ENCODE measurements at regions of chr14 and their contacts with region 1.

Region 1: DNA sequence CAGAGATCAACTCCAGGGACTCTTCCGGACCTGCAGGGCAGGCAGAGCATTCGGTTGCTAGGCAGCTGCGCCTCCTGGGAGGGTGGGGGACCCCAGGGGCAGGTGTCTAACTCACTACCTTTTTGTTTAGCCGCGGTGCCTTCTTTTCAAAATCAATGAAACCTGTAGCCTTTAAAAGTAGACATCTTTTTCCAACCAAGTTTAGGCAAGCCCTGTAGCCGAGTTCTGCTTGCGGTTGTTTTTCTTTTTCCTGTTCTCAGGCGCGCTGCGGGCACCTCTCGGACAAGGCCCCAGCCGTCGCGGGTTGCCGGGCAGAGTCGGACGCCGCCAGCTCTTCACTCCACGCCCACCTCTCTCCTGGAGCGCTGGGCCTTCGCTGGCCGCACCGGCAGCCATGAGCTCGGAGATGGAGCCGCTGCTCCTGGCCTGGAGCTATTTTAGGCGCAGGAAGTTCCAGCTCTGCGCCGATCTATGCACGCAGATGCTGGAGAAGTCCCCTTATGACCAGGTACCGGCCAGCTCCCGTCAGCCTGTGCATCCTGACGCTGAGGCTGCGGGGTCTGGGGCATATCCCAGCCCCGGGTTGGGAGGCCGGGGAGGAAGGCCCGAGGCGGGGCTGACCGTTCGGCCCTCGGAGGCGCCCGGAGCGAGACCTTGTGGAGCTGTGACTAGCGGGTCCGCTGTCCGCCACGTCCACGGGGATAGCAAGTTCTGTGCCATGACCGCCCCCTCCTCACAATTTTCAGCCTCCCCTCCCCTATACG is at the start of gene TTC8:
- DNase-seq: peak; percentile 77
- ATAC-seq: peak; percentile 97
- H3K4me3 Mint-ChIP-seq: peak within 1 kb of the TSS; percentile 88
- H3K27ac Mint-ChIP-seq: peak within 1 kb of the TSS; percentile 100
- H3K4me1 Mint-ChIP-seq: peaks cover 14% of the 10 kb centered on the region
- H3K27me3 Mint-ChIP-seq: peaks cover 11% of the 10 kb centered on the region
- CTCF ChIP-seq: no peak
- total RNA-seq, gene TTC8: 4.8 and 6.0 TPM in 2 replicates

Region 2: DNA sequence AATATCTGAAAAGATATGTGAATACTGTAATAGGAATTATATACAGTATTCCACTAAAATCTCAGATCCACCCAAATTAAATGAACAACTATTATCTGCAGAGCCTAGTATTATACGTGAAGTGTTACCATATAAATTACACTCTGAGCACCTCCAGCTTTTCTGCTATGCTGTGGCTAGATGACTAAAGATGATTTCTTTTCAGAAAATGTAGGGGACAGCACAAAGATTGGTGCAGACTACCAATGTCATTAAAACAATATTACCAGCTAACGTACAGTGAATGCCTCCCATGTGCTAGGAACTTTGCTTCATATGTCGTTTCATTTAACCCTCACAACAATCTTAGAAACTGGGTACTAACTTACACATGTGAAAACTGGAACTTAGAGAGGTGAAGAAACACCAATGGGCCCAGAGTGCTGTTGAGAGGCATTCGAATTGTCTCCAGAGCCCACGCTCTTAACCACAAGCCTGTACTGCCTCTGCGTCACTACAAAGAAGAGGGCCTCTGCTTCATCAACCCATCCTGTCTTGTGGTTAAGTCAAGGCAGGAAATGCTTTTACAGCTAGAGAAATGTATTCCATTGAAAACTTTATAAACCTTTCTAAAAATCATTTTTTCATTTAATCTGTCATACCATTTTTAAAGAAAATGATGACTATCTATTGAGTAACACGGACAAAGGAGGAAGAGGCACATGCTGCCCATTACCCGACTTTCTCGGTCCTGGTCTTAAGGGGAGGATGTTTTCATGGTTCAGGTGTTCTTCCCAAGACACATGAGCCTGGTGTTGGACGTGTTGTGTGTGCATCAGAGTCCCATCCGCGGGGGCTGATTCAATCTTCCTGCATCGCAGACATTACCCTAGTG is 818.3 kb before region 1 on chr14:
- CTCF ChIA-PET with region 1: no interaction called
- POLR2A ChIA-PET with region 1: no interaction called
- intact Hi-C with region 1: loop called (anchors 5 kb)
- DNase-seq: no peak
- ATAC-seq: peak; percentile 79
- H3K4me3 Mint-ChIP-seq: peak overlapping the region; percentile 83
- H3K27ac Mint-ChIP-seq: peak overlapping the region; percentile 84
- H3K4me1 Mint-ChIP-seq: peaks cover 77% of the 10 kb centered on the region
- H3K27me3 Mint-ChIP-seq: no peaks in the 10 kb centered on the region
- CTCF ChIP-seq: no peak

Region 3: GRCh38 chr14:89613260-89614008 is 788.9 kb after region 1 on chr14:
- CTCF ChIA-PET with region 1: no interaction called
- POLR2A ChIA-PET with region 1: no interaction called
- intact Hi-C with region 1: no loop called
- DNase-seq: no peak
- ATAC-seq: no peak
- H3K4me3 Mint-ChIP-seq: no peak overlapping the region
- H3K27ac Mint-ChIP-seq: no peak overlapping the region
- H3K4me1 Mint-ChIP-seq: peaks cover 64% of the 10 kb centered on the region
- H3K27me3 Mint-ChIP-seq: no peaks in the 10 kb centered on the region
- CTCF ChIP-seq: no peak

Measured in activated B cell treated with CpG ODN at 0.5 μM for 24 hours (primary cell).